K562 (cell line): ENCODE measurements at regions of chr13 and their contacts with region 1.

Region 1: DNA sequence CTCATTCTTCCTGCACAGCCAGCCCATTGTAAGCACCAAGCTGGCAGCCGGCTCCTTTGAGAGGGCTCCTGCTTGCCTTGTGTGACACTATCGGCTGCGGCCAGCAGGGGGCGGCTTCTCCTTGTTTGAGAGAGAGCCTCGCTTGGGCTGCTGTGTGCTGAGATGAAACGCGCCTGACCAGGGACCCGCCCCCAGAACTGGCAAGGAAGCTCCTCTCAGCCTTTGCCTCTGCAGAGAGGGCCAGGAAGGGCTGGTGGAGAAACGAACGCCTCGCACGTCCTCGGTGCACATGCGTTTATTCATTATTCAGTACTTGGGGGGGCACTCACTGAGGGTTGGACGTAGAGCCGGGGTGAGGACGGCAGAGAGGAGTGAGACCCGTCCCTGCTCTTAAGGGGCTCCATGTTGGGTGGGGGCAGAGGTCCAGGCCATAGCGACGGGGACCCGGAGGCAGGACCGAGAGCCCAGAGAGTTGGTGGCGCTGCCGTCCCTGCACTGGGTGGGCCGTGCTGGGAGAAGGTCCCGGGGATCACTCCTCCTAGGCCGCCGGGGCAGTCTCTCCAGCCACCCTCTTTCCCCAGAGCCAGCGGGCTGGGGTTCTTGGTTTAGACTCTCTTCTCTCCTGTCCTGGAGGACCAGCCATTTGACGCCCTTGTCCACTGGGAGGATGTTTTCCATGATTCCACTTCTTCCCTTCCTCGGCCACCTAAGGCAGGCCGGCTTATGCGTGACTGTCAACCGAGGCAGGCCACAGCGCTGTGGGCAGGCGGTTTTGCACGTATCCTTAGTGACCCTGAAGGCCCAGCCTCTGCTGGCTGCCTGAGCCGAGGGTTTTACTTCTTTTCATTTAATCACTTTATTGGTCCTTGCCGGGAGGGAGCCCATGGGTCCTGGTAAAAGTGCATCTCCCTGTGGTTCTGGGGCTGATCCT is 174.5 kb downstream of the KATNAL1 start:
- DNase-seq: peak; percentile 78 to 88 (median 80)
- ATAC-seq: peak; percentile 99
- H3K4me3 ChIP-seq: no peak overlapping the region
- H3K27ac ChIP-seq: no peak overlapping the region
- H3K4me1 ChIP-seq: peaks cover 0 to 12% of the 10 kb centered on the region in 2 experiments; a peak in 3 of 5 replicates
- H3K27me3 ChIP-seq: peaks cover 3 to 27% of the 10 kb centered on the region in 2 experiments; a peak in 2 of 5 replicates
- CTCF ChIP-seq: peak; percentile 81 to 83 (median 81)
- EP300 ChIP-seq: no peak
- POLR2A ChIP-seq: no peak
- RAD21 ChIP-seq: peak; percentile 75 to 86

Region 2: DNA sequence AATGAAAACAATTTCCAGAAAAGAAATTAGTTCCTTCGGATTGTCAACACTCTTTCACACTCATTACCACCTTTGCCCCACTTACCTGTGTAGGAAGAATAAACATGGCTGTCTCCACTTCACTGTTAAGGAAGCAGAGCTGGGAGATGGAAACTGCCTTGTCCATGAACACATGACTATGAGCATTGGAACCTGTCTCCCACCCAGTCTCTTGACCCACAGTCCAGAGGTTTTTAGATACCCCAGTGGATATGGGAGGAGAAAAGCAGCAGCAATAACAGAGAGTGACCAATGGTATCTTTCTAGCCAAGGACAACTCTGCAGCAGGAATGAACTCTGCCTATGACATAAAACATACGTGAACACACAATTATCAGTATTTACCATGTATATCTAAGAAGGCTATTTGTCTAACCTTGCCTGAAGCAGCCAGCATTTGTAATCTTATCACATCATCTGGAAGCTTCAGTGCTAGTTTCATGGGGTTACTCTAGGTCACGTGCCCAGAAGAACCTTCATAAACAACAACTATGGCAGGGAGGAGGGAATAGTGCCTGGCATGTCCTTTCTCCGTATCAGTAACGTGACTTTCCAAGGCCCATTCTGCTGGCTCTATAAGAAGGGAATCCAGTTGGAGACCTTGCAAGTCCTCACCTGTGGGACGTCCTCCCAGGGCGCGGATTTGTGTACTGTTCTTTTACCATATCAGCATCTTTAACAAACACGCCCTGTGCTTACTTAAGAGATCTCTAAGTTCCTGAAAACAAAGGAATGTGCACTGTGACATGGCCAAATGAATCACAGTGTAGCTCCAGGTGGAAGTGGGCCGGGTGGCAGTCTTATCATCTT is 60.7 kb before region 1 on chr13:
- CTCF ChIA-PET with region 1: no interaction called
- POLR2A ChIA-PET with region 1: no interaction called
- in situ Hi-C with region 1: no loop called
- intact Hi-C with region 1: no loop called
- DNase-seq: no peak
- ATAC-seq: no peak
- H3K4me3 ChIP-seq: no peak overlapping the region
- H3K27ac ChIP-seq: no peak overlapping the region
- H3K4me1 ChIP-seq: no peaks in the 10 kb centered on the region
- H3K27me3 ChIP-seq: no peaks in the 10 kb centered on the region; a peak in 1 of 5 replicates
- CTCF ChIP-seq: no peak
- EP300 ChIP-seq: no peak
- POLR2A ChIP-seq: no peak
- RAD21 ChIP-seq: no peak

Region 3: GRCh38 chr13:30334663-30335386 is 201.9 kb after region 1 on chr13:
- CTCF ChIA-PET with region 1: no interaction called
- POLR2A ChIA-PET with region 1: interaction called, 3 read pairs
- in situ Hi-C with region 1: loop called (anchors 25 kb)
- intact Hi-C with region 1: loop called (anchors 5 kb)
- DNase-seq: peak; percentile 37 to 73 (median 48)
- ATAC-seq: peak; percentile 88
- H3K4me3 ChIP-seq: no peak overlapping the region
- H3K27ac ChIP-seq: no peak overlapping the region
- H3K4me1 ChIP-seq: peaks cover 21 to 27% of the 10 kb centered on the region in 2 experiments; a peak in 4 of 5 replicates
- H3K27me3 ChIP-seq: no peaks in the 10 kb centered on the region
- CTCF ChIP-seq: peak; percentile 61 to 69 (median 63)
- EP300 ChIP-seq: no peak
- POLR2A ChIP-seq: no peak
- RAD21 ChIP-seq: peak; percentile 25 to 67; a peak in 3 of 4 replicates

Region 4: GRCh38 chr13:30551189-30551588 is 418.3 kb after region 1 on chr13:
- CTCF ChIA-PET with region 1: no interaction called
- POLR2A ChIA-PET with region 1: no interaction called
- in situ Hi-C with region 1: no loop called
- intact Hi-C with region 1: no loop called
- DNase-seq: peak in 2 of 4 experiments; percentile 14 to 29
- ATAC-seq: peak; percentile 85
- H3K4me3 ChIP-seq: no peak overlapping the region
- H3K27ac ChIP-seq: no peak overlapping the region
- H3K4me1 ChIP-seq: no peaks in the 10 kb centered on the region
- H3K27me3 ChIP-seq: peaks cover 4 to 6% of the 10 kb centered on the region in 2 experiments; a peak in 1 of 5 replicates
- CTCF ChIP-seq: peak; percentile 23 to 53 (median 48); a peak in 3 of 6 replicates
- EP300 ChIP-seq: no peak
- POLR2A ChIP-seq: no peak
- RAD21 ChIP-seq: peak; percentile 49 to 64

Region 5: DNA sequence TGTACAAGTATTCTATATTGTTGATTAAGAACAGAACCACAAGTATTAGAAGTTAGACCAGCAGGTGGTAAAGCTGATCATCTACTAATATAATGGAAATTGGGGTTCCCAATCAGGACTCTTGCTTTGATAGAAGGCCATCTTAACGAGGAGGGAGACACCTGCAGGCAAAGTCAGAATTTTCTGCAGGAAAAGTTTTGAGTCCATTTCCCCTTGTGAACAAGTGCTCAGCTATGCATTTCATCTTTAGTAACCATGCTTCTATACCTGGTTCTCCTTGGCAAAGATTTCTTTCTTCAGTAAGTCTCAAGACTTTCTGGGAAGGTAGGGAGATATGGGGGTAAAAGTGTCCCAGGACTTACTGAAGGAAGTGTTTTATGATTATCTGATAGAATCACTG is 448.7 kb after region 1 on chr13:
- CTCF ChIA-PET with region 1: interaction called, 5 read pairs
- POLR2A ChIA-PET with region 1: no interaction called
- in situ Hi-C with region 1: no loop called
- intact Hi-C with region 1: loop called (anchors 2 kb)
- DNase-seq: peak in 2 of 4 experiments; percentile 9 to 25
- ATAC-seq: no peak
- H3K4me3 ChIP-seq: no peak overlapping the region
- H3K27ac ChIP-seq: no peak overlapping the region
- H3K4me1 ChIP-seq: peaks cover 0 to 11% of the 10 kb centered on the region in 2 experiments; a peak in 4 of 5 replicates
- H3K27me3 ChIP-seq: no peaks in the 10 kb centered on the region; a peak in 1 of 5 replicates
- CTCF ChIP-seq: peak; percentile 22 to 53 (median 25); a peak in 4 of 6 replicates
- EP300 ChIP-seq: no peak
- POLR2A ChIP-seq: no peak
- RAD21 ChIP-seq: peak; percentile 28 to 57; a peak in 3 of 4 replicates

Region 6: GRCh38 chr13:30763786-30764413 is 631.0 kb after region 1 on chr13:
- CTCF ChIA-PET with region 1: no interaction called
- POLR2A ChIA-PET with region 1: no interaction called
- in situ Hi-C with region 1: no loop called
- intact Hi-C with region 1: no loop called
- DNase-seq: no peak
- ATAC-seq: no peak
- H3K4me3 ChIP-seq: no peak overlapping the region
- H3K27ac ChIP-seq: no peak overlapping the region
- H3K4me1 ChIP-seq: no peaks in the 10 kb centered on the region
- H3K27me3 ChIP-seq: no peaks in the 10 kb centered on the region; a peak in 4 of 5 replicates
- CTCF ChIP-seq: no peak
- EP300 ChIP-seq: no peak
- POLR2A ChIP-seq: no peak
- RAD21 ChIP-seq: no peak